Naive thymus-derived CD4-positive, alpha-beta T cell (primary cell): ENCODE measurements at regions of chr4 and their contacts with region 1.

Region 1: GRCh38 chr4:48602222-48602621 is 112.2 kb downstream of the ZAR1 start:
- DNase-seq: no peak
- ATAC-seq: no peak
- H3K4me3 ChIP-seq: no peak overlapping the region
- H3K4me3 Mint-ChIP-seq: no peak overlapping the region
- H3K27ac ChIP-seq: no peak overlapping the region
- H3K27ac Mint-ChIP-seq: peak overlapping the region in 1 of 9 donors; percentile 51
- H3K4me1 ChIP-seq: no peaks in the 10 kb centered on the region
- H3K4me1 Mint-ChIP-seq: peaks cover 0 to 5% (median 0%) of the 10 kb centered on the region in 7 donors
- H3K27me3 ChIP-seq: no peaks in the 10 kb centered on the region
- H3K27me3 Mint-ChIP-seq: no peaks in the 10 kb centered on the region

Region 2: GRCh38 chr4:48483006-48483776 is 119.0 kb before region 1 on chr4 and contains the start of gene SLC10A4:
- CTCF ChIA-PET with region 1: no interaction called
- POLR2A ChIA-PET with region 1: no interaction called
- intact Hi-C with region 1: no loop called
- DNase-seq: peak in 1 of 9 donors; percentile 32
- ATAC-seq: peak; percentile 46
- H3K4me3 ChIP-seq: peak within 1 kb of the TSS; percentile 33
- H3K4me3 Mint-ChIP-seq: peak within 1 kb of the TSS; percentile 69 to 89 (median 80)
- H3K27ac ChIP-seq: no peak within 1 kb of the TSS
- H3K27ac Mint-ChIP-seq: peak within 1 kb of the TSS in 3 of 9 donors; percentile 15 to 48 (median 30)
- H3K4me1 ChIP-seq: peaks cover 0 to 4% of the 10 kb centered on the region in 2 donors
- H3K4me1 Mint-ChIP-seq: peaks cover 16 to 21% (median 17%) of the 10 kb centered on the region in 7 donors
- H3K27me3 ChIP-seq: peaks cover 12 to 27% of the 10 kb centered on the region in 2 donors
- H3K27me3 Mint-ChIP-seq: peaks cover 57 to 76% (median 66%) of the 10 kb centered on the region in 5 donors
- total RNA-seq, gene SLC10A4: 0.16 to 0.17 TPM in 2 of 5 experiments, not detected in the others

Region 3: GRCh38 chr4:48578132-48578968 is 23.9 kb before region 1 on chr4:
- CTCF ChIA-PET with region 1: no interaction called
- POLR2A ChIA-PET with region 1: no interaction called
- intact Hi-C with region 1: no loop called
- DNase-seq: peak in 8 of 9 donors; percentile 29 to 66 (median 50)
- ATAC-seq: peak; percentile 95
- H3K4me3 ChIP-seq: no peak overlapping the region
- H3K4me3 Mint-ChIP-seq: no peak overlapping the region
- H3K27ac ChIP-seq: no peak overlapping the region
- H3K27ac Mint-ChIP-seq: peak overlapping the region in 6 of 9 donors; percentile 28 to 79 (median 52)
- H3K4me1 ChIP-seq: no peaks in the 10 kb centered on the region
- H3K4me1 Mint-ChIP-seq: peaks cover 0 to 7% (median 0%) of the 10 kb centered on the region in 7 donors
- H3K27me3 ChIP-seq: no peaks in the 10 kb centered on the region
- H3K27me3 Mint-ChIP-seq: no peaks in the 10 kb centered on the region

Region 4: GRCh38 chr4:48623182-48623780 is 21.1 kb after region 1 on chr4:
- CTCF ChIA-PET with region 1: no interaction called
- POLR2A ChIA-PET with region 1: no interaction called
- intact Hi-C with region 1: loop called in 1 of 2 experiments (anchors 2 kb)
- DNase-seq: no peak
- ATAC-seq: no peak
- H3K4me3 ChIP-seq: no peak overlapping the region
- H3K4me3 Mint-ChIP-seq: no peak overlapping the region
- H3K27ac ChIP-seq: no peak overlapping the region
- H3K27ac Mint-ChIP-seq: peak overlapping the region in 1 of 9 donors; percentile 8
- H3K4me1 ChIP-seq: no peaks in the 10 kb centered on the region
- H3K4me1 Mint-ChIP-seq: peaks cover 3 to 16% (median 4%) of the 10 kb centered on the region in 7 donors
- H3K27me3 ChIP-seq: no peaks in the 10 kb centered on the region
- H3K27me3 Mint-ChIP-seq: no peaks in the 10 kb centered on the region